ENCODE measurements at regions of chr1 and their contacts with region 1.

Region 1: GRCh38 chr1:158998781-158999161 is 10.9 kb upstream of the IFI16 start:
- DNase-seq: peak; percentile 40
- ATAC-seq: peak; percentile 39; the same call in 1 of the 3 replicates
- H3K4me3 ChIP-seq: no peak overlapping the region
- H3K27ac ChIP-seq: no peak overlapping the region
- H3K4me1 ChIP-seq: no peaks in the 10 kb centered on the region
- H3K27me3 ChIP-seq: no peaks in the 10 kb centered on the region
- CTCF ChIP-seq: peak; percentile 72
- EP300 ChIP-seq: no peak
- POLR2A ChIP-seq: no peak
- RAD21 ChIP-seq: 0 out of 2 replicates have a peak, but pooled peaks have one; percentile 22

Region 2: DNA sequence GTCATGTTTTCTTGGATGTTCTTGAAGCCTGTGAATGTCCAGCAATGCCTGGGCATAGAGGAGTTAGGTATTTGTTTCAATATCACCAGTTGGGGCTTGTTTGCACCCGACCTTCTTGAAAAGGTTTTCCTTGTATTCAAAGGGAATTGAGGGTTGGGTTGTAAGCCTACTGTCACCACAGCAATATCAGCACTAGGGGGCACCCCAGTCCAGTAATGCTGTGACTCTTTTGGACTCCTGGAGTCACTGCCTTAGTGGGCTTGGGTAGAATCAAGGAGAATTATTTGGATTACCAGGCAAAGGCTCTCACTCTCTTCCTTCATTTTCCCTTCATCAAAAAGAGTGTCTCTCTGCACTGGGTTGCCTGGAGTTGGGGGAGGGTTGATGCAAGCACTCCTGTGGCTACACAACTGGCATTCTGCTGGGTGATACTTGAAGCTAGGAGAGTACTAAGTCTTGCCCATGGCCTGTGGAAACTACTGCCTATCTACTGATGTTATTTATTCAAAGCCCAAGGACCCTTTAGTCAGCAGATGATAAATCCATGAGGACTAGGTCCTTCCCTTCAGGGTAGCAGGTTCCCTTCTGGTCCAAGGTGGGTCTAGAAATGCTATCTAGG is 492.3 kb before region 1 on chr1:
- CTCF ChIA-PET with region 1: interaction called, 3 read pairs
- POLR2A ChIA-PET with region 1: no interaction called
- in situ Hi-C with region 1: no loop called
- intact Hi-C with region 1: loop called (anchors 2 kb)
- DNase-seq: peak; percentile 1
- ATAC-seq: no peak
- H3K4me3 ChIP-seq: no peak overlapping the region
- H3K27ac ChIP-seq: no peak overlapping the region
- H3K4me1 ChIP-seq: no peaks in the 10 kb centered on the region
- H3K27me3 ChIP-seq: no peaks in the 10 kb centered on the region
- CTCF ChIP-seq: 0 out of 2 replicates have a peak, but pooled peaks have one; percentile 31
- EP300 ChIP-seq: no peak
- POLR2A ChIP-seq: no peak
- RAD21 ChIP-seq: no peak

Region 3: GRCh38 chr1:159207774-159208173 is 209.0 kb after region 1 on chr1:
- CTCF ChIA-PET with region 1: no interaction called
- POLR2A ChIA-PET with region 1: no interaction called
- in situ Hi-C with region 1: no loop called
- intact Hi-C with region 1: no loop called
- DNase-seq: no peak
- ATAC-seq: no peak
- H3K4me3 ChIP-seq: no peak overlapping the region
- H3K27ac ChIP-seq: no peak overlapping the region
- H3K4me1 ChIP-seq: no peaks in the 10 kb centered on the region
- H3K27me3 ChIP-seq: no peaks in the 10 kb centered on the region; a peak in 1 of 5 replicates
- CTCF ChIP-seq: no peak
- EP300 ChIP-seq: no peak
- POLR2A ChIP-seq: no peak
- RAD21 ChIP-seq: no peak